Activated CD4-positive, alpha-beta T cell treated with anti-CD3 and anti-CD28 coated beads, Interleukin-2, amount 10 ng/mL, durations not matched to agents 24 days and 14 days (primary cell): ENCODE measurements at regions of chr6 and their contacts with region 1.

Region 1: GRCh38 chr6:25050356-25050755 is 114.6 kb upstream of the RIPOR2 start:
- DNase-seq: peak; percentile 83
- H3K4me3 Mint-ChIP-seq: peak overlapping the region; percentile 71
- H3K27ac Mint-ChIP-seq: peak overlapping the region; percentile 92
- H3K4me1 Mint-ChIP-seq: peaks cover 49% of the 10 kb centered on the region
- H3K27me3 Mint-ChIP-seq: no peaks in the 10 kb centered on the region

Region 2: DNA sequence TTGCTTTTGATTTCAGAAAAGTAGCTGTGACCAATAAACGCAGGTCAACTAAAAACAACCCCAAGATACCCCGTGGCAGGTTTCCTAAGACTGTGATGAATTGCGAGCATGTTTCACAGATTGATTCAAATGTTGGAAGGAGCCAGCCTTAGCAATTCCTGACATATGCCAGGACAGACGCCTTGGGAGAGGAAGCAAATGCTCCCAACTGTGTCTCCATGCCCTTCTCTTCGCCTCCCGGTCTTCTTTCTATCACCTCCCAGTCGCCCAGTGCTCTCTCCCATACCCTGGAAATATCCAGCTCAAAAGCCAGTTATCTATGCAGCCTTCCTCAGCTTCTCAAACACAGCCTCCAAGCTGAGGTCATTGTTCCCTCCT is 436.3 kb before region 1 on chr6:
- intact Hi-C with region 1: no loop called
- DNase-seq: no peak
- H3K4me3 Mint-ChIP-seq: no peak overlapping the region
- H3K27ac Mint-ChIP-seq: no peak overlapping the region
- H3K4me1 Mint-ChIP-seq: no peaks in the 10 kb centered on the region
- H3K27me3 Mint-ChIP-seq: peaks cover 10% of the 10 kb centered on the region

Region 3: GRCh38 chr6:25035527-25036435 is 14.6 kb before region 1 on chr6:
- intact Hi-C with region 1: loop called (anchors 2 kb)
- DNase-seq: peak; percentile 74
- H3K4me3 Mint-ChIP-seq: peak overlapping the region; percentile 92
- H3K27ac Mint-ChIP-seq: peak overlapping the region; percentile 97
- H3K4me1 Mint-ChIP-seq: peaks cover 57% of the 10 kb centered on the region
- H3K27me3 Mint-ChIP-seq: no peaks in the 10 kb centered on the region

Region 4: GRCh38 chr6:26087284-26088115 is 1037.1 kb after region 1 on chr6 and contains the start of gene HFE:
- intact Hi-C with region 1: no loop called
- DNase-seq: peak; percentile 83
- H3K4me3 Mint-ChIP-seq: peak within 1 kb of the TSS; percentile 83
- H3K27ac Mint-ChIP-seq: peak within 1 kb of the TSS; percentile 70
- H3K4me1 Mint-ChIP-seq: peaks cover 41% of the 10 kb centered on the region
- H3K27me3 Mint-ChIP-seq: peaks cover 1% of the 10 kb centered on the region
- total RNA-seq, gene HFE: 0.12 and 0.50 TPM in 2 replicates